ENCODE measurements at regions of chr5 and their contacts with region 1.

Region 1: GRCh38 chr5:149667084-149667828 is 62.9 kb upstream of the PPARGC1B start:
- DNase-seq: peak; percentile 47 to 62
- ATAC-seq: peak; percentile 60 to 79; a peak in 5 of 6 replicates
- H3K4me3 ChIP-seq: no peak overlapping the region
- H3K27ac ChIP-seq: no peak overlapping the region
- H3K4me1 ChIP-seq: peaks cover 23% of the 10 kb centered on the region
- CTCF ChIP-seq: peak; percentile 88
- EP300 ChIP-seq: no peak
- POLR2A ChIP-seq: no peak
- RAD21 ChIP-seq: peak; percentile 71 to 72

Region 2: DNA sequence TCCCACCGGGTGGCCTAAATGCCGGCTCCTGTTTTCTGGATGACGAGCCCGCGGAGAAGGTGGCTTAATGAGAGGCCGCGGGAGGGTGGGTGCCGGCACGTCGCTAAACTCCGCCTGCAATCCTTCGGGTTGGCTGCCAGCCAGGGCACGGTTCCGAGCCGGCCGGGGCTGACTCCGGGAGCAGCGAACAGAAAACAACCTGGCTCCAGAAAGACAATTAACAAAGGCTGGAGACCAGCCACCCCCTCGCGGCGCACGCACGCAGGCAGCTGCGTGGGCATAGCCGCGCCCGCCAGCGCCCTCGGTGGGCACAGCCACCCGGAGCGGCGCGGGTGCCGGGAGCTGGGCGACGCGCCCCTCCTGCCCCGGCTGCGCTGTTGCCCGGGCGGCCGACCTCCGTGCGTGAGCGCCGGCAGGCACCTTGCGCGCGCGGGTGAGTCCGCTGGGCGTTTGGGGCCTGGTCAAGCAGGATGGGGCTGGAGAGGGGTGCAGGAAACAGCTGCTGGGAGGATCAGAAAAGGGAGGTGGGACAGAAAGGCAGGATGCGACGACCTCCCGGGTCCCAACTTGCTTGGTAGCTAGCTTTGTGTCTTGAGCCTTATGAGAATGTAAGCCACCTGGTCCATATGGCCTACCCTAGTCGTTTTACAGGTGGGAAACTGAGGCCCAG is 85.9 kb before region 1 on chr5 and contains the start of gene ARHGEF37:
- CTCF ChIA-PET with region 1: no interaction called
- POLR2A ChIA-PET with region 1: no interaction called
- DNase-seq: peak in 1 of 2 experiments; percentile 42
- ATAC-seq: peak; percentile 90
- H3K4me3 ChIP-seq: peak within 1 kb of the TSS; percentile 58
- H3K27ac ChIP-seq: peak within 1 kb of the TSS; percentile 79 to 83
- H3K4me1 ChIP-seq: peaks cover 15% of the 10 kb centered on the region; the same call in 2 of the 3 replicates
- CTCF ChIP-seq: no peak
- EP300 ChIP-seq: no peak
- POLR2A ChIP-seq: peak; percentile 14; the same call in 1 of the 2 replicates
- RAD21 ChIP-seq: no peak
- polyA plus RNA-seq, gene ARHGEF37: 1.5 and 1.7 TPM in 2 replicates

Region 3: GRCh38 chr5:149656576-149657182 is 10.6 kb before region 1 on chr5:
- CTCF ChIA-PET with region 1: interaction called, 26 read pairs
- POLR2A ChIA-PET with region 1: no interaction called
- DNase-seq: peak; percentile 38 to 43
- ATAC-seq: peak in 1 of 2 experiments; percentile 44; a peak in 3 of 6 replicates
- H3K4me3 ChIP-seq: no peak overlapping the region
- H3K27ac ChIP-seq: no peak overlapping the region
- H3K4me1 ChIP-seq: no peaks in the 10 kb centered on the region
- CTCF ChIP-seq: peak; percentile 34; the same call in 1 of the 3 replicates
- EP300 ChIP-seq: no peak
- POLR2A ChIP-seq: no peak
- RAD21 ChIP-seq: peak in 1 of 2 experiments; percentile 45; a peak in 2 of 5 replicates

Region 4: GRCh38 chr5:149724130-149724840 is 57.0 kb after region 1 on chr5:
- CTCF ChIA-PET with region 1: interaction called, 26 read pairs
- POLR2A ChIA-PET with region 1: no interaction called
- DNase-seq: no peak
- ATAC-seq: no peak
- H3K4me3 ChIP-seq: no peak overlapping the region
- H3K27ac ChIP-seq: no peak overlapping the region
- H3K4me1 ChIP-seq: 0 out of 3 replicates have a peak, but pooled peaks cover 4% of the 10 kb centered on the region
- CTCF ChIP-seq: no peak
- EP300 ChIP-seq: no peak
- POLR2A ChIP-seq: no peak
- RAD21 ChIP-seq: no peak

Region 5: DNA sequence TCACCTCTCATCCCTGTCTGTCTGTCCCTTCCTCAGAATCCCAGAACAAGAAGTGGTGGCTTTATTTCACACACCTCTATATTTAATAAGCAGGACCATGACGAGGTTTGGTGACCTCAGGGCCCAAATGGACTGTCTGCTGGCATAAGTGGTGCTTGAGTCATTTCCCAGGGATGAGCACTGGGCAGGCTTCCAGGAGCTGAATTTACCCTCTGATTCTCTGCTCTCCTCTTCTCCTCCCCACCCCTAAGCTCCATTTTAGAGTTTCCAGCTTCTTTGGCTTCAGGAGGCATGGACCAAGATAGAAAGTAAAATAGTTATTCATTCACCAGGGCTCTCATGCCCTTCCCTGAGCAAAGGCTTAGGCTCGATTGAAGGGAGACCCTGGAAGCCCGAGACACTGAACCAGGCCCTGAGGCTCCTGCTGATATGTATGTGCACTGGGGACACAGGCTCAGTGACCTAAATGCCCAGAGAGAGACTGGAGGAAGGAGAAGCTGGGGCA is 131.9 kb after region 1 on chr5:
- CTCF ChIA-PET with region 1: interaction called, 13 read pairs
- POLR2A ChIA-PET with region 1: no interaction called
- DNase-seq: peak; percentile 91 to 94
- ATAC-seq: peak; percentile 85 to 89
- H3K4me3 ChIP-seq: 0 out of 3 replicates have a peak overlapping the region, but pooled peaks have one; percentile 4
- H3K27ac ChIP-seq: peak overlapping the region; percentile 88 to 95
- H3K4me1 ChIP-seq: peaks cover 67% of the 10 kb centered on the region
- CTCF ChIP-seq: no peak
- EP300 ChIP-seq: no peak
- POLR2A ChIP-seq: no peak
- RAD21 ChIP-seq: no peak

Region 6: DNA sequence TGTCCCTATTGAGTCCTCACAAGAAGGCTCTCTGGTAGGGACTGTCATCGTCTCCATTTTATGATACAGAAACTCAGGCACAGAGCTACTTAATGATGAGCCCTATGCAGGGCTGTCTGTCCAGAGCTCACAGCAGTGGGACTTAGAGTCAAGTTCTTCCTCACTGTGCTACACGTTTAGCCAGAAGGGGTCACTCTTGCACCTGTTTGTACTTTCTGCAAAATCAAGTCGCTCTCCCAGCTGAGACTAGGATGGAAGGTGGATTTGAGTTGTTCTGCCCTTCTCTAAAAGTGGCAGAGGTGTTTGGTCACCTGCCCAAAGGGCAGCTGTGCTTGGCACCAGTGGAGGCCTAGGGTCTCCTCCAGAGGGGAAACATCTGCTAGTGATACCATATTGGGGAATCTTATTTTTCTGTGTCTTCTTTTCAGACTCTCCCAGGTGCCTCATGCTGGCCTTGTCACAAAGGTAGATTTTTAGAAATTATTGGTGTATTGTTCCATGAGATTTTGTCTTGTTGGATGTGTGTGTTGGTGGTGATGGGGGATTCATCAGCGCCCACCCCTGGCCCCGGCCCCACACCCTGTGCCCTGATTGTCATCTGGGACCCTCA is 167.1 kb after region 1 on chr5:
- CTCF ChIA-PET with region 1: interaction called, 106 read pairs
- POLR2A ChIA-PET with region 1: no interaction called
- DNase-seq: peak; percentile 87 to 90
- ATAC-seq: peak; percentile 67 to 77
- H3K4me3 ChIP-seq: no peak overlapping the region
- H3K27ac ChIP-seq: no peak overlapping the region
- H3K4me1 ChIP-seq: peaks cover 16% of the 10 kb centered on the region
- CTCF ChIP-seq: peak; percentile 91
- EP300 ChIP-seq: no peak
- POLR2A ChIP-seq: no peak
- RAD21 ChIP-seq: peak; percentile 83 to 90